GM12878 (cell line): ENCODE measurements at regions of chr4 and their contacts with region 1.

Region 1: GRCh38 chr4:158865520-158866177 is 96.8 kb downstream of the FNIP2 start:
- DNase-seq: peak; percentile 59
- ATAC-seq: peak; percentile 41
- H3K4me3 ChIP-seq: no peak overlapping the region
- H3K27ac ChIP-seq: peak overlapping the region; percentile 19; the same call in 1 of the 2 replicates
- H3K4me1 ChIP-seq: peaks cover 12% of the 10 kb centered on the region
- H3K27me3 ChIP-seq: no peaks in the 10 kb centered on the region
- CTCF ChIP-seq: no peak
- EP300 ChIP-seq: no peak
- POLR2A ChIP-seq: no peak
- RAD21 ChIP-seq: no peak

Region 2: GRCh38 chr4:158906073-158906472 is 40.4 kb after region 1 on chr4:
- CTCF ChIA-PET with region 1: interaction called, 3 read pairs
- POLR2A ChIA-PET with region 1: no interaction called
- RAD21 ChIA-PET with region 1: interaction called, 3 read pairs
- SMC1A ChIA-PET with region 1: interaction called, 9 read pairs
- in situ Hi-C with region 1: no loop called
- intact Hi-C with region 1: loop called (anchors 5 kb)
- DNase-seq: peak; percentile 53
- ATAC-seq: peak; percentile 98
- H3K4me3 ChIP-seq: no peak overlapping the region
- H3K27ac ChIP-seq: no peak overlapping the region
- H3K4me1 ChIP-seq: peaks cover 4% of the 10 kb centered on the region; the same call in 1 of the 2 replicates
- H3K27me3 ChIP-seq: no peaks in the 10 kb centered on the region
- CTCF ChIP-seq: no peak
- EP300 ChIP-seq: peak; percentile 37 to 59; a peak in 2 of 4 replicates
- POLR2A ChIP-seq: no peak
- RAD21 ChIP-seq: no peak